Endothelial cell of umbilical vein (primary cell): ENCODE measurements at regions of chr17 and their contacts with region 1.

Region 1: DNA sequence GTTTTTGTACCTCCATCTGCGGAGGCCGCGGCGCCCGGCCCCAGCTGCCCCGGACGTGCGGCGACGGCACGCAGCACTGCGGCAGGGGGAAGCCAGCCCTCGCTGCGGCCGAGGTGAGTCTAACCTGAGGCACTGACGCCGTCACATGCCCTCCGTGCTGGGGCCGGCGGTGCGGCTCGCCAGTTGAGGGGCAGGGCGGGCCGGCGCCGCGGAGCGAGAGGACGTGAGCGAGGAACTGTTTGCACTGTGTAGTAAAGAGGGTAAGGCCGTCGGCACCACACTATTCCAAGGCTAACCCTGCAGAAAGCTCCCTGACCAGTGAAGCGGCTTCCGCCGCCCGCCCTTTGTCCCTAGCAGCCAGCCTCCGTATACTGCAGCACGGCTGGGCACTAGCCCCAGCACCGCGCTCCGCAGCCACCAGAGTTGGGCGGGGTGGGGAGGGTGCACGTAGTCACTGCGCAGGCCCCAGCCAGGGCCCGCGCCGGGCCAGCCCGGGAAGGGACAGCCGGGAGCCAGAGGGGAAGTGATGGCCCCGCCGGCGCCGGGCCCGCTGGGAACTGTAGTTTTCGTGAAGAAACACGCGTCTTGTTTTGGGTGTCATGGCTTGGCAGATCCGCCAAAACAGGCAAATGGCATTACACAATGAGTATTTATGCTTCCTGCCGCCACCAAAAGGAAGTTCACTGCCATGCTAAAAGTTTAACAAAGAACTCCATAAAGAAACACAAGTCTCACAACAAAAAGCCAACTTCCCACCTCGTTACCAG is 580 bp upstream of the KANSL1 start:
- DNase-seq: peak; percentile 95
- H3K4me3 ChIP-seq: peak overlapping the region; percentile 33 to 90 (median 64)
- H3K27ac ChIP-seq: peak overlapping the region; percentile 62
- H3K4me1 ChIP-seq: peaks cover 26% of the 10 kb centered on the region
- H3K27me3 ChIP-seq: no peaks in the 10 kb centered on the region
- CTCF ChIP-seq: no peak
- POLR2A ChIP-seq: peak; percentile 84

Region 2: DNA sequence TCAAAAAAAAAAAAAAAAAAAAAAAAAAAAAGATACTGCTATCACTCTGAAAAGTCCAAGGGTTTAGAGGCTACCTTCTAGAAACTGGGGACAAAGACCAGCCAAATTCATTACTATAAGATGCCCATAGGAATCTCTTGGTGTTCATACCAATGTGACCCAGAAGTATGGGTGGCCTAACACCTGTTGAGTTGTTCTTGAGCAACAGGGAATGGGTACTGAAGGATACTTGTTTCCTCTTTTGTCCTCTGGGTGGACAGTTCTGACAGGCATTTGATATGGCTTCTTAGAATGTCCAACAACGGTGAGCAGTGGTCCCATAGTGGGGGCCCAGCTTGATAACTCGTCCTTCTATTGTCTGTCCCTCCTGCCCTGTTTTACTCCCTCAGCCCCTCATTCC is 561.9 kb before region 1 on chr17:
- CTCF ChIA-PET with region 1: no interaction called
- POLR2A ChIA-PET with region 1: no interaction called
- dilution Hi-C with region 1: no loop called
- intact Hi-C with region 1: no loop called
- DNase-seq: no peak
- H3K4me3 ChIP-seq: no peak overlapping the region
- H3K27ac ChIP-seq: no peak overlapping the region
- H3K4me1 ChIP-seq: no peaks in the 10 kb centered on the region
- H3K27me3 ChIP-seq: no peaks in the 10 kb centered on the region
- CTCF ChIP-seq: no peak
- POLR2A ChIP-seq: no peak

Region 3: DNA sequence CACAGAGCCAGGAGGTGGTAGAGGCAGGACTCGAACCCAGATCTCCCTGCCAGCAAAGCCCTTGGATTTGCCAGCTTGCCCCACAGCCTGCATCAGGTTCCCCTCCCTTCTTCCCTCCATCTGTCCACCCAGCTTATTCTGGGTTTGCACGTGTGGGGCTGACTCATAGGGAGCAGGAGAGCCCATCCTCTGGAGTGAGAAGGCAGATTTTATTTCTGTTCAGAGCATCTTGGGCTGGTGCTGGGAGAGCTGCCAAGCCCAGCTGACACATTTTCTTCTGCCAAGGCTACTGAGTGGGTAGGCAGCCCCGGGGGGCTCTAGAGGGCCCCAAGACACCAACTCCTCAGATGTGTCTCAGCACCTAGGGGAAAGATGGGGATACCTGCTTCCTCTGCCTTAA is 516.0 kb before region 1 on chr17:
- CTCF ChIA-PET with region 1: no interaction called
- POLR2A ChIA-PET with region 1: no interaction called
- dilution Hi-C with region 1: no loop called
- intact Hi-C with region 1: no loop called
- DNase-seq: no peak
- H3K4me3 ChIP-seq: no peak overlapping the region
- H3K27ac ChIP-seq: no peak overlapping the region
- H3K4me1 ChIP-seq: no peaks in the 10 kb centered on the region
- H3K27me3 ChIP-seq: peaks cover 0 to 3% of the 10 kb centered on the region in 2 experiments
- CTCF ChIP-seq: no peak
- POLR2A ChIP-seq: no peak

Region 4: DNA sequence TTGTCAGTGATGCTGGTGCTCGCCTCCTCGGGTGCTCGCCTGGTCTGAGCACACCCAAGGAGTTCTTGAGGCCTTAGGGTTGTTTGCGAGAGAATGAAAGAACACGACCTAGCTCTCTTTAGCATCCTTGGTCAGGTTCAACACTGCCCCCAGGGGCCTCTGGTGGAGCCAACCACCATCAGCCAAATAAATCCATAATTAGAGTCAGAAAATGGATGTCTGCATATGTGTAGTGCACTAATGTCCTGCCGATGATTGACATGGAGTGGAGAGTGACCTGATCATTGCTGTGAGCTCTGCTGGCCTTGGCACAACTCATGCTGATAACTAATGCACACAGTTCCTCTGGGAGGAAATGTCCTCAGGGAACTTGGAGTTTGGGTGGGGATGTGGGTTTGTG is 202.9 kb before region 1 on chr17:
- CTCF ChIA-PET with region 1: no interaction called
- POLR2A ChIA-PET with region 1: no interaction called
- dilution Hi-C with region 1: no loop called
- intact Hi-C with region 1: no loop called
- DNase-seq: no peak
- H3K4me3 ChIP-seq: no peak overlapping the region
- H3K27ac ChIP-seq: no peak overlapping the region
- H3K4me1 ChIP-seq: no peaks in the 10 kb centered on the region
- H3K27me3 ChIP-seq: peaks cover 0 to 2% of the 10 kb centered on the region in 2 experiments
- CTCF ChIP-seq: no peak
- POLR2A ChIP-seq: no peak

Region 5: DNA sequence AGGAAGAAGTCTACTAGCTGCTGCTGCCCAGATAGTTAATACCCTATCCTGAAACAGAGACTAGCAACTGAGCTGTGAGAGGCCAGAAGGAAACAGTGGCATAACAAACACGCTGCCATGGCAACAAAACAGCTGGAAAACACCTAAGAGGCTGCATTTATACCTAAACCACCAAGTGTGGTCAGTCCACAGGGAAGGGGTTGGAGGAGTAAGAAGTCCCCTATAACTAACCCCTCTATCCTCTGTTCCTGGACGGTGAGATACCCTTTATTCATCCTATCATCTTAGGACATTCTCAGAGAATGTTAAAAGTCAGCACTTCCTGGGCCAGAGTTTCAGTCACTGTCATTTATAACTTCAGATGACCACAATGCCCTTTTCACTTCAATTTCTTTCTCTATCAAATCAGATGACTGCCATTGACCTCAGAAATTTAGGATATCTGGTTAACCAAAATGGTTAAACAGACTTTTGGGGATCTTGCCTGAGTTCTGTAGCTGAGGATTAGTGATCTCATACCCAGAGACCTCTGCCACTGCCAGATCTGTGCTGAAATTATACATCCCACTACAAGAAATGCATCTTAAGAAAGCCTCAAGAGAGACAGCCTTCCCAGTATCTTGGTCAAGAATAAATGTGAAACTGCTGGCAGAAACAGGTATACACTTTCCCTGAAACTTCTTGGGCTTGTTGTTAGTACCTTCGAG is 158.5 kb before region 1 on chr17:
- CTCF ChIA-PET with region 1: interaction called, 33 read pairs
- POLR2A ChIA-PET with region 1: no interaction called
- dilution Hi-C with region 1: no loop called
- intact Hi-C with region 1: no loop called
- DNase-seq: no peak
- H3K4me3 ChIP-seq: no peak overlapping the region
- H3K27ac ChIP-seq: no peak overlapping the region
- H3K4me1 ChIP-seq: no peaks in the 10 kb centered on the region
- H3K27me3 ChIP-seq: no peaks in the 10 kb centered on the region
- CTCF ChIP-seq: no peak
- POLR2A ChIP-seq: no peak

Region 6: GRCh38 chr17:46072998-46073397 is 120.8 kb before region 1 on chr17:
- CTCF ChIA-PET with region 1: interaction called, 32 read pairs
- POLR2A ChIA-PET with region 1: no interaction called
- dilution Hi-C with region 1: no loop called
- intact Hi-C with region 1: no loop called
- DNase-seq: no peak
- H3K4me3 ChIP-seq: no peak overlapping the region
- H3K27ac ChIP-seq: no peak overlapping the region
- H3K4me1 ChIP-seq: peaks cover 4% of the 10 kb centered on the region
- H3K27me3 ChIP-seq: no peaks in the 10 kb centered on the region
- CTCF ChIP-seq: no peak
- POLR2A ChIP-seq: no peak

Region 7: DNA sequence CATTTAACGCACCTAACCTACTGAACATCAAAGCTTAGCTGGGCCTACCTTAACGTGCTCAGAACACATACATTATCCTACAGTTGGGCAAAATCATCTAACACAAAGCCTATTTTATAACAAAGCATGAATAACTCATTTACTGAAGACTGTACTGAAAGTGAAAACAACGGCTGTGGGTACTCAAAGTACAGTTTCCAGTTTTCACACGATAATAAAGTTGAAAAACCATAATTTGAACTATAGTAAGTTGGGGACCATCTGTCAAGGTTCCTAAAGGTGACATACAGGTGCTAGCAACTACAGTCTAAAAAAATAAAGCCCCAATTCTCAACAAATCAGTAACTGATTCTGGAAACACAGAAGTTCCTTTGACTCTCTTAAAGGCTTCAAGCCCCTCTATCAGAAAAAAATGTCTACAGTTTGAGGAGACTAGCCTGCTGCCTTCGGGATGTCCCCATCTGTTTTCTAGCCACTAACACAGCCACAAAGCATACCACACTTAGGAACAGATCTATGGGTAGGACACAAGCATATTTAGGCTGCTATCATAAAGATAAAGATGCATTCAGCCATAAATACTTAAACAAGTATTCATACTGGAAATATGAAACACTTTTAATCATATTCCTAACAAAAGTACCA is 71.8 kb before region 1 on chr17:
- CTCF ChIA-PET with region 1: interaction called, 12 read pairs
- POLR2A ChIA-PET with region 1: no interaction called
- dilution Hi-C with region 1: no loop called
- intact Hi-C with region 1: no loop called
- DNase-seq: no peak
- H3K4me3 ChIP-seq: no peak overlapping the region
- H3K27ac ChIP-seq: no peak overlapping the region
- H3K4me1 ChIP-seq: peaks cover 5% of the 10 kb centered on the region
- H3K27me3 ChIP-seq: no peaks in the 10 kb centered on the region
- CTCF ChIP-seq: no peak
- POLR2A ChIP-seq: no peak

Region 8: GRCh38 chr17:46157443-46158062 is 36.3 kb before region 1 on chr17:
- CTCF ChIA-PET with region 1: interaction called, 14 read pairs
- POLR2A ChIA-PET with region 1: no interaction called
- dilution Hi-C with region 1: no loop called
- intact Hi-C with region 1: loop called (anchors 5 kb)
- DNase-seq: peak; percentile 63
- H3K4me3 ChIP-seq: no peak overlapping the region
- H3K27ac ChIP-seq: no peak overlapping the region
- H3K4me1 ChIP-seq: peaks cover 51% of the 10 kb centered on the region
- H3K27me3 ChIP-seq: no peaks in the 10 kb centered on the region
- CTCF ChIP-seq: no peak
- POLR2A ChIP-seq: no peak

Region 9: DNA sequence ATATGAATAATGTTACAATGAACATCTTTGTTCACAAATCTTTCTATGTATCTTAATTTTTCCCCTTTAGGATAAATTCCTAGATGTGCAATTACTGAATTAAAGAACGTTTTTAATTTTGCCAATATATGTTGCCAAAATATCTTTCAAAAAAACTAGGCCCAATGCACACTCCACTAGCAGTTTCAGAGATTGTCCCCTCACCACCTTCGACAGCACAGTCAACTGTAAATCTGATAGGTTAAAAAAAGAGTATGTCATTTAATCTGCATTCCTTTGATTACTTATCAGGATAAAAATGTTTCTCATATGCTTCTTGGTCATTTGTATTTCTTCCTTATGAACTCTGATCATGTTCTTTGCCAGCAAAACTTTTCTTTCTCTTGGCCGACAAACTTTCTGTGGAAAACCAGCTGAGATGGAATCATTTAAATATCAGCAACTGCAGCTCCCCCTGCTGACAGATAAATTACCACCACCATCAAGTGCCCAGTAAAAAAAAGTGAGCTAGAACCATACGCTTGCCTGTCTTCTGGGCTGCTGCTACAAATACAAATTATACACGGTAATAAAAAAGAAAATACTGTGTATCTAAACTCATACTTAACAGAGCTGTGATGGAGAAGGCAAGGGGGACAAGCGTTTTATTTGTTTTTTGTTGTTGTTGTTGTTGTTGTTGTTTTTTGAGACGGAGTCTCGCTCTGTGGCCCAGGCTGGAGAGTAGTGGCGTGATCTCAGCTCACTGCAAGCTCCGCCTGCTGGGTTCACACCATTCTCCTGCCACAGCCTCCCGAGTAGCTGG is 19.0 kb after region 1 on chr17:
- CTCF ChIA-PET with region 1: interaction called, 48 read pairs
- POLR2A ChIA-PET with region 1: interaction called, 3 read pairs
- dilution Hi-C with region 1: no loop called
- intact Hi-C with region 1: loop called (anchors 1 kb)
- DNase-seq: peak; percentile 83
- H3K4me3 ChIP-seq: no peak overlapping the region
- H3K27ac ChIP-seq: no peak overlapping the region
- H3K4me1 ChIP-seq: no peaks in the 10 kb centered on the region
- H3K27me3 ChIP-seq: no peaks in the 10 kb centered on the region
- CTCF ChIP-seq: peak; percentile 63 to 71
- POLR2A ChIP-seq: no peak